AG04449 (cell line): ENCODE measurements at regions of chr7 and their contacts with region 1.

Region 1: DNA sequence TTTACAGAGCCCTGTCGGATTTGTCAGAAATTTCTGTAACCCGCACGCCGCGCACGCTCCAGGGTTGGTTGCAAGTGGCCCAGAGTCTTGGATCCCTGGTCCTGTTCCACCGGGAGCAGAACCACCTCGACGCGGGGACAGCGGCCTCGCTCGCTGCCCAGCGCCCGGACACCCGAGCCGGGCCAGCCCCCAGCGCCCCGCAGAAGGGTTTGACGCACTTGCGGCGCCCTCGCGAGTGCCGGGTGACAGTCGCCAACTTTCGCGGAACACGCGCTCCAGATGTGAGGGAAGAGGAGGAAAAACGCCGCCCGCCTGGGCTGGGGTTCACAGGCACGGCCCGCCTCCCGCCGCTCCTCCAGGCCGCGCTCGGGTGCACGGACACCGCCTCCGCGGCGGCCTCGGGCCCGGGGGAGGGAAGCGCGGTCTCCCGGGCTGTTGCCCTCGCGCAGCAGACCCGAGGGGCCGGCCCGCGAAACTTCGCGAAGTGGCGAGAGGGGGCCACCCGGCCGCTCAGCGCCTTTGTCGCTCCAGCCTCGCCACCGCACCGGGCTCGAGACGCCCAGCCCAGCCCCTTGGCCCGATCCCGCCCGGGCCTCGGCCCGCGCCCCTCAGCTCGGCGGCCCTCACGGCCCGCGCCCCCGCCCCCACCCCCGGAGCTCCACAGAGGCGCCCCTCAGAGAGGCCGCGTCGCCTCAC is 514 bp downstream of the RNF216 start:
- DNase-seq: no peak
- H3K4me3 ChIP-seq: peak overlapping the region; percentile 81
- CTCF ChIP-seq: no peak

Region 2: DNA sequence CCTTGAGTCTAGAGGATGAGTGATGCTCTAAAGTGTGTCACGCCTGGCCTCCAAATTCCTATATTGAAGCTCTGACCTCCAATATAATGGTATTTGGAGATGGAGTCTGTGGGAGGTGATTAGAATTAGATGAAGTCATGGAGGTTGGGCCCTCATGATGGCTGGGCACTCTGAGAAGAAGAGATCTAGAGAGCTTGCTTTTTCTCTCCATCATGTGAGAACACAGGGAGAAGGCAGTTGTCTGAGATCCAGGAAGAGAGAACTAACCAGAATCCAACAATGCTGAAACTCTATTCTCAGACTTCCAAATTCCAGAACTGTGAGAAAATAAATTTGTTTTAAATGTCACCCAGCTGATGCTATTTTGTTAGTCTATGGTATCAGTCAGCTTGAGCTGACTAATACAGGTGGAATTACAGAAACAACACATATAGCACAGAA is 14.6 kb before region 1 on chr7:
- CTCF ChIA-PET with region 1: interaction called, 23 read pairs
- POLR2A ChIA-PET with region 1: interaction called, 8 read pairs
- DNase-seq: peak; percentile 37
- H3K4me3 ChIP-seq: no peak overlapping the region
- CTCF ChIP-seq: no peak

Region 3: GRCh38 chr7:5793361-5794072 is 12.6 kb after region 1 on chr7:
- CTCF ChIA-PET with region 1: interaction called, 29 read pairs
- POLR2A ChIA-PET with region 1: no interaction called
- DNase-seq: no peak
- H3K4me3 ChIP-seq: no peak overlapping the region
- CTCF ChIP-seq: no peak